ENCODE measurements at regions of chr17 and their contacts with region 1.

Region 1: GRCh38 chr17:31842183-31843069 is 16.6 kb downstream of the COPRS start:
- DNase-seq: peak; percentile 68 to 87
- H3K4me3 ChIP-seq: no peak overlapping the region
- H3K27ac ChIP-seq: no peak overlapping the region
- H3K4me1 ChIP-seq: no peaks in the 10 kb centered on the region; a peak in 1 of 7 replicates
- H3K27me3 ChIP-seq: peaks cover 0 to 4% (median 0%) of the 10 kb centered on the region in 4 experiments; a peak in 4 of 7 replicates
- CTCF ChIP-seq: peak; percentile 83 to 93 (median 93)
- EP300 ChIP-seq: no peak
- POLR2A ChIP-seq: no peak
- RAD21 ChIP-seq: peak; percentile 100

Region 2: DNA sequence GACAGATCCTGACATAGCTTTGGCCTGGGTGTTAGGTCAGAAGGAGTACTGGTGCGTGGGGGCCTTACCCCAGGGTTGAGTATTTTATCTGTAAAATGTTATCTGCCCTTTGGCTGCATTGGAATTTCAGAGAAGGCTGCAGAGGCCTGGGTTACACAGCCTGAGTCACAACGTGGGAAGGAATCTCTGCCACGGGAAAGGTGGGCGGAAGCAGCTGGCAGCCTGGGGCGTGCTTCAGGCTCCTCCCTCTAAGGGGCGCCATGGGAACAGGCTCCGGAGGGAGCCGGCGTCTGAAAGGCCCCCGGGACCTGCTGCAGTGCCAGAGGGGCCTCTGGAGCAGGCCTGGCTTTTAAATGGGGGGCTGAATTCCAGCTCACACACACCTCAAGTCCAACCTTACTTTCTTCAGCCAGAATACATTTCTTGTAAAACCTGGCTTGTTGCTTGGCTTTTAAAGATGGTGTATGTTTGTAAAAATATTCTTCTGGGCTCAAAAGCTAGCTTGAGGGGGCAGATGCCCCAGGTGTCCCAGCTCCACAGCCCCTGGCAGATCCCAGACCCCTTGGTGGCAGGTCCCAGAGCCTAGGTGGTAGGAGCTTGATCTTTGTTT is 308.8 kb before region 1 on chr17:
- CTCF ChIA-PET with region 1: interaction called, 82 read pairs
- POLR2A ChIA-PET with region 1: interaction called, 3 read pairs
- DNase-seq: peak in 1 of 2 experiments; percentile 79
- H3K4me3 ChIP-seq: no peak overlapping the region
- H3K27ac ChIP-seq: no peak overlapping the region
- H3K4me1 ChIP-seq: peaks cover 0 to 4% (median 2%) of the 10 kb centered on the region in 4 experiments; a peak in 2 of 7 replicates
- H3K27me3 ChIP-seq: no peaks in the 10 kb centered on the region
- CTCF ChIP-seq: peak; percentile 65 to 67 (median 65)
- EP300 ChIP-seq: no peak
- POLR2A ChIP-seq: no peak
- RAD21 ChIP-seq: peak; percentile 70 to 84

Region 3: DNA sequence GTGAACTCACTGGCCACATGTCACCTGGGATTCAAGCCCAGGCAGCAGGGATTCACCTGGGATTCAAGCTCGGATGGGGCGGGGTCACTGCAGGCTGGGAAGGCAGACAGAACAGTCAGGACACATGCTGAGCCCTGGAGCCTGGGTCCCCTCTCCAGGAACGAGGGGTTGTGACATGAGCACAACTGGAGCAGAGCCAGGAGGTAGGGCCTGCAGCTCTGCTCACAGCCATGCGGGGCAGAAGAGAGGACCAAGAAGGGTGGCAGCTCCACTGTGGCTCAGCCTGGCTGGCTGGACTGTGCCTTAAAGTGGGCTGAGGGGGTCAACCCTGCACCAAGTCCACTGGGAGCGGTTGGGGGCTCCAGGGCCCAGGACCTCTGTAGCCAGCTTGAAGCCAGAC is 300.9 kb before region 1 on chr17:
- CTCF ChIA-PET with region 1: interaction called, 16 read pairs
- POLR2A ChIA-PET with region 1: no interaction called
- DNase-seq: peak in 1 of 2 experiments; percentile 48
- H3K4me3 ChIP-seq: no peak overlapping the region
- H3K27ac ChIP-seq: no peak overlapping the region
- H3K4me1 ChIP-seq: no peaks in the 10 kb centered on the region
- H3K27me3 ChIP-seq: no peaks in the 10 kb centered on the region
- CTCF ChIP-seq: peak in 2 of 3 experiments; percentile 46 to 52; a peak in 2 of 4 replicates
- EP300 ChIP-seq: no peak
- POLR2A ChIP-seq: no peak
- RAD21 ChIP-seq: peak; percentile 31 to 45

Region 4: GRCh38 chr17:31558748-31559644 is 283.4 kb before region 1 on chr17:
- CTCF ChIA-PET with region 1: interaction called, 72 read pairs
- POLR2A ChIA-PET with region 1: interaction called, 3 read pairs
- DNase-seq: peak in 1 of 2 experiments; percentile 88
- H3K4me3 ChIP-seq: peak overlapping the region; percentile 33 to 74 (median 44); a peak in 7 of 8 replicates
- H3K27ac ChIP-seq: no peak overlapping the region
- H3K4me1 ChIP-seq: peaks cover 8 to 21% (median 15%) of the 10 kb centered on the region in 4 experiments
- H3K27me3 ChIP-seq: peaks cover 6 to 54% (median 32%) of the 10 kb centered on the region in 4 experiments; a peak in 6 of 7 replicates
- CTCF ChIP-seq: peak; percentile 61 to 93 (median 66)
- EP300 ChIP-seq: no peak
- POLR2A ChIP-seq: no peak
- RAD21 ChIP-seq: peak; percentile 49 to 82

Region 5: DNA sequence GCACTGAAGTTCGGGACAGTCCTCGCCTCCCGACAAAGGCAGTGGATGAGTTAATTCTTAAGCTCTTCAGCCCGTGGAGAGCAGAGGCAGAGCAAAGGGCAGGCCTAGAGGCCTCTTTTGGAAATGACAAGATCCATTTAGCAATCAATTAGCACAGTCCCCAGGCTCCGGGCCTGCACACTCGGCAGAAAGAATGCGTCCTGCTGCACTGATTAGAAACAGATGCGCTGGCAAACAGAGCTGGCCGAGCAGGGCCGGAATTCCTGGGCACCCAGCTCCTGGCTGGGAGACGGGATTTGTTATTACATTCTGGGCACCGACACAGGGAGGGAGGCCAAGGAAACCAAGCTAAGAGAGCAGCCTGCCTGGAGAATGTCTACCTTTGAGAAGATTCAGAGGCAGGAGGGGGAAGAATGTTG is 146.2 kb before region 1 on chr17:
- CTCF ChIA-PET with region 1: interaction called, 11 read pairs
- POLR2A ChIA-PET with region 1: no interaction called
- DNase-seq: peak in 1 of 2 experiments; percentile 49
- H3K4me3 ChIP-seq: no peak overlapping the region
- H3K27ac ChIP-seq: no peak overlapping the region
- H3K4me1 ChIP-seq: no peaks in the 10 kb centered on the region; a peak in 1 of 7 replicates
- H3K27me3 ChIP-seq: no peaks in the 10 kb centered on the region
- CTCF ChIP-seq: peak in 2 of 3 experiments; percentile 21 to 30; a peak in 2 of 4 replicates
- EP300 ChIP-seq: no peak
- POLR2A ChIP-seq: no peak
- RAD21 ChIP-seq: peak; percentile 7 to 45; a peak in 2 of 4 replicates

Region 6: DNA sequence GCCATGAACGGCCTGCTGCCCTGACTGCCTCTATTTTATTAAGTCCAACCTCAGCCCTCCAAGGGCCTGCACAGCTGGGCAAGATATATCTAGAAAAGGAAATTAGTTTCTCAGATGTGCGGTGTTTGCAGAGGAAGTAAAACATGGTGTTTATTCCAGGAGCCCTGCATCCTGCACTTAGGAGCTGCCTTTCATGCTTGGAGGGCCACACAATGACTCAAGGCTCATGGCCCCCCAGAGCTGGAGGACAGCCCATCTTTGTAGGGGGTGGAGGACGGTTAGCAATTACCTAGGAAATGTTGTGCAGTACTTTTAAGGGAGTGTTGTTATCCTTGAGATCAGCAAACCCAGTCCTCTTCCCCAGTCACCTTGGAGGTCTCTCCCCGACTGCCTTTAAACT is 63.9 kb before region 1 on chr17:
- CTCF ChIA-PET with region 1: no interaction called
- POLR2A ChIA-PET with region 1: no interaction called
- DNase-seq: no peak
- H3K4me3 ChIP-seq: no peak overlapping the region
- H3K27ac ChIP-seq: no peak overlapping the region
- H3K4me1 ChIP-seq: no peaks in the 10 kb centered on the region
- H3K27me3 ChIP-seq: no peaks in the 10 kb centered on the region
- CTCF ChIP-seq: no peak
- EP300 ChIP-seq: no peak
- POLR2A ChIP-seq: no peak
- RAD21 ChIP-seq: no peak

Region 7: DNA sequence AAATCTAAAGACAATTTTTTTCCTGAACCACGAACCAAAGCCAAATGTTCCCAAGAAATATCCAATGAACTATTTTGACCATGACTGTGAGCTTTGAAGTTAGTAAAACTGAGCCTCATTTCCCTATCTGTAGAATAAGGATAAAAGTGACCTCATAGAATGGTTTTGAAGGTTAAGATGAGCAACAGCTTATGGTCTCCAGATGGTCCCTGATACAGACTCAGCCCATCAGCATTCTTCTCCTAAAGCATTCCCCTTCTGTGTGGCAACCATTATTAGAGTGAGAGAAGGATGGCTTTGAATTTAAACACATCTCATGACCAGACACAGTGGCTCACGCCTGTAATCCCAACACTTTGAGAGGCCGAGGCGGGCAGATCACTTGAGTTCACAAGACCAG is 53.5 kb before region 1 on chr17:
- CTCF ChIA-PET with region 1: no interaction called
- POLR2A ChIA-PET with region 1: no interaction called
- DNase-seq: no peak
- H3K4me3 ChIP-seq: no peak overlapping the region
- H3K27ac ChIP-seq: no peak overlapping the region
- H3K4me1 ChIP-seq: no peaks in the 10 kb centered on the region
- H3K27me3 ChIP-seq: no peaks in the 10 kb centered on the region
- CTCF ChIP-seq: no peak
- EP300 ChIP-seq: no peak
- POLR2A ChIP-seq: no peak
- RAD21 ChIP-seq: no peak

Region 8: GRCh38 chr17:31853911-31854470 is 11.6 kb after region 1 on chr17:
- CTCF ChIA-PET with region 1: interaction called, 11 read pairs
- POLR2A ChIA-PET with region 1: no interaction called
- DNase-seq: no peak
- H3K4me3 ChIP-seq: no peak overlapping the region
- H3K27ac ChIP-seq: no peak overlapping the region
- H3K4me1 ChIP-seq: peaks cover 0 to 6% (median 3%) of the 10 kb centered on the region in 4 experiments; a peak in 4 of 7 replicates
- H3K27me3 ChIP-seq: no peaks in the 10 kb centered on the region
- CTCF ChIP-seq: no peak
- EP300 ChIP-seq: no peak
- POLR2A ChIP-seq: no peak
- RAD21 ChIP-seq: no peak

Region 9: GRCh38 chr17:31869797-31870568 is 27.6 kb after region 1 on chr17:
- CTCF ChIA-PET with region 1: no interaction called
- POLR2A ChIA-PET with region 1: no interaction called
- DNase-seq: no peak
- H3K4me3 ChIP-seq: no peak overlapping the region
- H3K27ac ChIP-seq: no peak overlapping the region
- H3K4me1 ChIP-seq: no peaks in the 10 kb centered on the region
- H3K27me3 ChIP-seq: no peaks in the 10 kb centered on the region
- CTCF ChIP-seq: no peak
- EP300 ChIP-seq: no peak
- POLR2A ChIP-seq: no peak
- RAD21 ChIP-seq: no peak

Measured in H1 (cell line).